ENCODE measurements at regions of chr1 and their contacts with region 1.

Region 1: DNA sequence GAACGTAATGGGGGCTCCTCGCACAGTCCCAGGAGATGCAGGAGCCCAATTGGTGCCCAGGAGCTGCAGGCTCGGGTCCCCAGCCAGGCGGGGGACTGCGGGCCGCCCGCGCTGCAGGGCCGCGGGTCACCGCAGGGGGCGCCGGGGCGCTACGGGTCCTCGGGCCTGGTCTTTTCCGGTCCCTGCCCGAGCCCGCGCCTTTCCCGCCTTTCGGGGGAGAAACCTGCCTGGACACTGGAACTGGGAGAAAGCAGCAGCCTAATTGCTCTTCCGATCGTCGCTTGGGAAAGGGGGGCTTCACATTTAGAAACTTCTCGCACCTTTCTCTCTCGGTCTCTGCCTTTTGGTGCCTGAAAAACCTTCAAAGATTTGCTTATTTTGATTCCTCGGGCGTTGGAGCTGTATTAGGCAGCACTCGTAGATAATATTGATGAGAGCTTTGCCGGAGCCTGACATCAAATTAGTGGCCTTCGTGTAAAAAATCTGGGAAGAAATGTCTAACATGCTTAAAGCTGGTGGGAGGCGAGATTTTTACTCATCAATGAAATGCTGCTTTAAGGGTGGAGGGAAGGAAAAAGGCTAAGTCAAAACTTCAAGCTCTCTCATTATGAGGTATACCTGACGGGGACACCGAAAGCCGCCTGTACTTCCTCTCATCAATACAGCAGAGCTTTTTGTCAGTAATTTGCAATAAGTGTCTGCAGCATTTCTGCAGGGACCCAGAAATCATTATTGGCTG is 12.6 kb upstream of the BARHL2 start:
- DNase-seq: peak; percentile 58
- CTCF ChIP-seq: peak; percentile 43

Region 2: GRCh38 chr1:90964444-90965035 is 234.9 kb after region 1 on chr1:
- in situ Hi-C with region 1: loop called (anchors 25 kb)
- DNase-seq: no peak
- CTCF ChIP-seq: peak; percentile 42

Region 3: DNA sequence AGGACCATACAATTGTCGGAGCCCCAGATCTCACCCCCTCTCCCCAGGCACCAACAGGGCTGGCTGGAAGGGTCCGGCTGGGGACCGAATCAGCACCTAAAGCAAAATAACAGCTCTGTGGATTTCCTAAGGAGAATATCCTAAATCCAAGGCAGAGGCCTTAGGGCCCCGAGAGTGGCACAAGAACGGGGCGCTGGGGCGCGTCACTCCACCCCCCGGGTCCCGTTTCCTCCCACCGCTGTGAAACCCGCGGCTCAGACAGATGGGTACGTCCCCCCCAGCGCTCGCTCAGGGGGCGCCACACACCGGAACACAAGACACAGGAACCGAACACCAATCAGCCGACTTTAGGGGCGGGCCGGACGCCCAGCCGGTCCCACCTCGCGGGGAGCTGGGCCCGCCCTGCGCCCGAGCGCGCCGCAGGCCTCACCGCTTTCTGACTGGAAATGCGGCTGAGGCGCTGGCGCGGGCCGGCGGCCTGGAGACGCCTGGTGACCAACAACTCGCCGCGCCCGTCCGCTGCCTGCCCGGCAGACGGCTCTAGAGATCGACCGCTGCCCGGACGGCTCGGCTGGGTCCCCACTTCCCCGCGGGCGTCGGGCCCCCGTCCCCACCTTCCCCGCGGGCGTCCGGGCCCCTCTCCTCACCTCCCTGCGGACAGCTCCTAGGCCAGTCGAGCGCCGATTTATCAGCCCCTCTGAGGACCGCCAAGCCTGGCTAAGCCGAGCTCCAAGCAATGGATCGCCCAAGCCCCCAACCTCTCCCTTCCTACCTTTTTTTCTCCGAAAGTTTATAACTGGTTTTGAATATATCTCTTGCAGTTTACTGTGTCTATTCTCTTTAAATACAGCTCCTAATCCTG is 674.7 kb after region 1 on chr1 and contains the start of gene HFM1:
- in situ Hi-C with region 1: no loop called
- DNase-seq: peak; percentile 83
- CTCF ChIP-seq: peak; percentile 1

Measured in GM13977 (cell line).